Colonic mucosa (tissue), 4 donors: ENCODE measurements at regions of chr20 and their contacts with region 1.

Region 1: DNA sequence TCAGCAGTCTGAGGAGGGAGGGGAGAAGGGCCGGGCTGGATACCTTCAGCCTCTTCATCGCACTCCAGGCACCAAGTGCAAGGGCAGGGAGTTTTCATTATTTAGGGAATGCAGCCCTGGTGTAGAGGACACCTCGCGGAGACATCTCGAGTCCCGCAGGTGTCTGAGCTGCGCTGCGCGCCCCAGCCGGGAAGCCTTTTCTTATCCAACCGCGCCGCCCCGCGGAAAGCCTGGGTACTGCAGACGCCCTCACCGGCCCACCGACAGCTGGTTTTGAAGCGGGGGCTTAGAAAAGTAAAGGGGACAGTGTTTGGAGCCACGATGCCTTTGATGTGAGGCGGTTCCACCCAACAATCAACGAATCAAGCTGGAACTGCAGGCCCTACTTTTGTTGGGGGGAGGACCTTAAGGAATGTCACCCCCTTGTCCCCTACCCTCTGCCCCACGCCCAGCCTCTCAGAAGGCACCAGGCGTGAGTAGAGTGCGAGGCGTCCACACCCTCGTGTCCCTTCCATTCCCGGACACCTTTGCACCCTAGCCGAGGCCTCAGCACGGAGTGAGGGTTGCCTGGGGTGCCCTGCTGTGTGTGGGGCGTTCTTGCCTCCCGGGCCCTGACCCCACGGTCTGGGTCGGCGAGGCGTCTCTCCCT is 8.6 kb downstream of the NKX2-2 start:
- DNase-seq: peak; percentile 66
- H3K4me3 ChIP-seq: peak overlapping the region; percentile 38
- H3K27ac ChIP-seq: no peak overlapping the region
- H3K4me1 ChIP-seq: peaks cover 10% of the 10 kb centered on the region
- H3K27me3 ChIP-seq: peaks cover 59% of the 10 kb centered on the region
- CTCF ChIP-seq: peak; percentile 91

Region 2: GRCh38 chr20:20843982-20844381 is 661.3 kb before region 1 on chr20:
- intact Hi-C with region 1: no loop called
- DNase-seq: no peak
- H3K4me3 ChIP-seq: no peak overlapping the region
- H3K27ac ChIP-seq: no peak overlapping the region
- H3K4me1 ChIP-seq: no peaks in the 10 kb centered on the region
- H3K27me3 ChIP-seq: no peaks in the 10 kb centered on the region
- CTCF ChIP-seq: no peak

Region 3: GRCh38 chr20:20860078-20860806 is 645.0 kb before region 1 on chr20:
- intact Hi-C with region 1: loop called (anchors 2 kb)
- DNase-seq: peak; percentile 90
- H3K4me3 ChIP-seq: no peak overlapping the region
- H3K27ac ChIP-seq: no peak overlapping the region
- H3K4me1 ChIP-seq: no peaks in the 10 kb centered on the region
- H3K27me3 ChIP-seq: no peaks in the 10 kb centered on the region
- CTCF ChIP-seq: peak; percentile 97

Region 4: GRCh38 chr20:21048841-21049273 is 456.4 kb before region 1 on chr20:
- intact Hi-C with region 1: loop called (anchors 10 kb)
- DNase-seq: peak; percentile 54
- H3K4me3 ChIP-seq: no peak overlapping the region
- H3K27ac ChIP-seq: no peak overlapping the region
- H3K4me1 ChIP-seq: no peaks in the 10 kb centered on the region
- H3K27me3 ChIP-seq: no peaks in the 10 kb centered on the region
- CTCF ChIP-seq: peak; percentile 70

Region 5: GRCh38 chr20:21235484-21236445 is 269.5 kb before region 1 on chr20:
- intact Hi-C with region 1: loop called (anchors 2 kb)
- DNase-seq: peak; percentile 68
- H3K4me3 ChIP-seq: no peak overlapping the region
- H3K27ac ChIP-seq: no peak overlapping the region
- H3K4me1 ChIP-seq: no peaks in the 10 kb centered on the region
- H3K27me3 ChIP-seq: no peaks in the 10 kb centered on the region
- CTCF ChIP-seq: peak; percentile 78